OCI-LY7 (cell line): ENCODE measurements at regions of chr2 and their contacts with region 1.

Region 1: GRCh38 chr2:221476202-221476601 is 95.9 kb downstream of the EPHA4 start:
- DNase-seq: no peak
- H3K4me3 ChIP-seq: no peak overlapping the region
- H3K27ac ChIP-seq: no peak overlapping the region
- H3K4me1 ChIP-seq: no peaks in the 10 kb centered on the region
- CTCF ChIP-seq: no peak

Region 2: DNA sequence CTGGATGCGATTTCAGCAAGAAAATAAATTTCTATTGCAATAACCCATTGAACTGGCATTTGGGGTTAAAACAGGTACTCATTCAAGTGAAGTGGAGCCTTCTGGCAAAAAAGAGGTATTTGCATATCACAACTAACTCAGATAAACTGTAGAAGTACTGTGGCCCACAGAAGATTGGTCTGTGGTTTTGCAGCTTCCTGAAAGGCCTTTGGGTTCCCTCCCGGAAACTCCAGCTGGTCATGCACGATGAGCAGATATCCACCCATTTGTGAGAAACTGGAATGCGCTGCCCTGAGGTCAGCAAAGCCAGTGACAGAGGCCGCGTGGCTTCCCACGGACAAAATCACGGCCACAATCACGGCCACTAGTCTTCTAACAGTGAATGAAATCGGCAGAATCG is 10.4 kb before region 1 on chr2:
- CTCF ChIA-PET with region 1: no interaction called
- POLR2A ChIA-PET with region 1: interaction called, 10 read pairs
- intact Hi-C with region 1: no loop called
- DNase-seq: no peak
- H3K4me3 ChIP-seq: no peak overlapping the region
- H3K27ac ChIP-seq: no peak overlapping the region
- H3K4me1 ChIP-seq: no peaks in the 10 kb centered on the region
- CTCF ChIP-seq: no peak